Vagina (tissue), 2 donors: ENCODE measurements at regions of chr22 and their contacts with region 1.

Region 1: GRCh38 chr22:44625981-44626687 is 75.9 kb upstream of the PRR5 start:
- DNase-seq: no peak
- H3K4me3 ChIP-seq: no peak overlapping the region
- H3K27ac ChIP-seq: no peak overlapping the region
- H3K4me1 ChIP-seq: no peaks in the 10 kb centered on the region
- H3K27me3 ChIP-seq: no peaks in the 10 kb centered on the region
- CTCF ChIP-seq: peak; percentile 94 to 99 (median 99)
- POLR2A ChIP-seq: no peak

Region 2: GRCh38 chr22:43399338-43399979 is 1226.7 kb before region 1 on chr22:
- intact Hi-C with region 1: loop called (anchors 10 kb)
- DNase-seq: no peak
- H3K4me3 ChIP-seq: no peak overlapping the region
- H3K27ac ChIP-seq: no peak overlapping the region
- H3K4me1 ChIP-seq: no peaks in the 10 kb centered on the region
- H3K27me3 ChIP-seq: no peaks in the 10 kb centered on the region
- CTCF ChIP-seq: no peak
- POLR2A ChIP-seq: no peak

Region 3: GRCh38 chr22:43993027-43993760 is 632.9 kb before region 1 on chr22:
- intact Hi-C with region 1: loop called (anchors 2 kb)
- DNase-seq: no peak
- H3K4me3 ChIP-seq: no peak overlapping the region
- H3K27ac ChIP-seq: no peak overlapping the region
- H3K4me1 ChIP-seq: no peaks in the 10 kb centered on the region
- H3K27me3 ChIP-seq: no peaks in the 10 kb centered on the region
- CTCF ChIP-seq: peak; percentile 91 to 93 (median 92)
- POLR2A ChIP-seq: no peak

Region 4: GRCh38 chr22:44080936-44081861 is 544.9 kb before region 1 on chr22:
- intact Hi-C with region 1: loop called (anchors 10 kb)
- DNase-seq: no peak
- H3K4me3 ChIP-seq: no peak overlapping the region
- H3K27ac ChIP-seq: no peak overlapping the region
- H3K4me1 ChIP-seq: peaks cover 19% of the 10 kb centered on the region
- H3K27me3 ChIP-seq: no peaks in the 10 kb centered on the region
- CTCF ChIP-seq: peak; percentile 67 to 76 (median 69)
- POLR2A ChIP-seq: no peak

Region 5: DNA sequence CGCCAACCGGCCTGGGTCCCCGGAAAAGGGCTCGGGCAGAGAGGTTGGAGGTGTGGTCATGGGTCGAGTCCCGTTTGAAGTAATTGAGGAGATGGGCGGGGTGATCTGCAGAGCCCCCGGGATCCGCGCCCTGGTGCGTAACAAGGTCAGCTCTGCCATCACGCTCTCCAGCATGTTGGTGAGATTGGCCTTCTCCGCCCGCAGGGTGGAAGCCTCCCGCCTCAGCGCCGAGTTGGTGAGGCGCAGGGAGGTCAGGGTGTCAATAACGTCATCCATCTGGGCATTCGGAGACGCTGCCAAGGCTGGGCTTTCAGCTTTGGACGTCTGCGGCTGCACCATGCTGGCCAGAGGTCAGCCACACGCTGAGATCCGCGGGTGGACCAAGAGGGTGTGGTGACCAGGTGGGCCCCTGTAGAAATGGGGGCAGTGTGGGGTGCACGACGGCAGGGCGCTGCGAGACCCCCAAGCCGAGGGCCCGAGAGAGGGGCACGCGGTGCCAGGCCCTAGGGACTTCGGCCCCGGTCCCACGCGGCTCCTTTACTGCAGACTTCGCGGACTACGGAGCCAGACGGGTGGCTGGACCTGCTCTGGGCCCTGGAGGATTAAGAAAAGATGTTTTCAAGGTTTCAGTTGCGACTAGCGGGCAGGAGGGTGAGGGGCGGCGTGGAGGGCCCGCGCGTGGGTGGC is 128.8 kb before region 1 on chr22:
- intact Hi-C with region 1: no loop called
- DNase-seq: no peak
- H3K4me3 ChIP-seq: peak overlapping the region; percentile 87 to 98
- H3K27ac ChIP-seq: peak overlapping the region; percentile 84
- H3K4me1 ChIP-seq: peaks cover 23% of the 10 kb centered on the region
- H3K27me3 ChIP-seq: no peaks in the 10 kb centered on the region
- CTCF ChIP-seq: no peak
- POLR2A ChIP-seq: no peak

Region 6: GRCh38 chr22:44554411-44554810 is 71.7 kb before region 1 on chr22:
- intact Hi-C with region 1: no loop called
- DNase-seq: peak in 1 of 2 donors; percentile 65
- H3K4me3 ChIP-seq: no peak overlapping the region
- H3K27ac ChIP-seq: no peak overlapping the region
- H3K4me1 ChIP-seq: peaks cover 18% of the 10 kb centered on the region
- H3K27me3 ChIP-seq: no peaks in the 10 kb centered on the region
- CTCF ChIP-seq: no peak
- POLR2A ChIP-seq: no peak

Region 7: DNA sequence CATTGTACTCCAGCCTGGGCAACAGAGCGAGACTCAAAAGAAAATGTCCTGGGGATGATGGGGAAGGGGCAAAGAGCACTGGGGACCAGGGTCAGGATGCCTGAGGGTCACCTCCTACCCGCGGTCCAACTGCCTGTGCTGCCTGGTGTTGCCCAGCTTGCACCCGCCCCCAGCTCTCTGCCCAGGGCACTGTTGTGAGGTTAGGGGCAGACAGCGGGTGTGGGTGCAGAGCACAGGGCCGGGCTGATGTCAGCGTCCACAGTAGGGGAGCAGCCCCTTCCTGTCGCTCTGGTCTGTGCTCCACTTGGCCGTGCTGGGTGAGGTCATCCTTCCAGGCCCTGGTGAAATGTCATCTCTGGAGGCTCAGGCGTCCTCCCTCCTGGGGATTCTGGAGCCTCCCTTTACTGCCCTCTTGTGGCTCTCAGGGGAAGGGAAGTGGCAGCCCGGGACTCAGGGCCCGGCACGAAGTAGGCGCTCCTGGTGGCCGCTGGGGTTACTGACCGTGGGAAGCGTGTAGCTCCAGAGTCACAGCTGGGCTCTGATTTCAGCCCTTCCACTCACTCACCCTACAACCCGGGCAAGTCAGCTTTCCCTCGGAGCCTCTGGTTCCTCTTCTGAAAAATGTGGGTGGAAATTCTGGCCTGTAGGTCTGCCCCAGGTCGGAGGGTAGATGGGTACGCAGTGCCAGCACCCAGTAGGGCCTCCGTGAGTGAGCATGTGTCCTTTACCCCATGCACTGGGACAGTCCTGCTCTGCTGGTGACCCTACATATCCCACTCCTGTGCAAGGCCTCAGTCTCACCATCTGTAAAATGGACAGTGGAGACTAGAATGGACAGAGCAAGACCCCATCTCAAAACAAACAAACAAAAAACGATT is 58.6 kb after region 1 on chr22:
- intact Hi-C with region 1: no loop called
- DNase-seq: no peak
- H3K4me3 ChIP-seq: no peak overlapping the region
- H3K27ac ChIP-seq: peak overlapping the region; percentile 71
- H3K4me1 ChIP-seq: peaks cover 19% of the 10 kb centered on the region
- H3K27me3 ChIP-seq: no peaks in the 10 kb centered on the region
- CTCF ChIP-seq: peak; percentile 75 to 97 (median 78)
- POLR2A ChIP-seq: no peak

Region 8: DNA sequence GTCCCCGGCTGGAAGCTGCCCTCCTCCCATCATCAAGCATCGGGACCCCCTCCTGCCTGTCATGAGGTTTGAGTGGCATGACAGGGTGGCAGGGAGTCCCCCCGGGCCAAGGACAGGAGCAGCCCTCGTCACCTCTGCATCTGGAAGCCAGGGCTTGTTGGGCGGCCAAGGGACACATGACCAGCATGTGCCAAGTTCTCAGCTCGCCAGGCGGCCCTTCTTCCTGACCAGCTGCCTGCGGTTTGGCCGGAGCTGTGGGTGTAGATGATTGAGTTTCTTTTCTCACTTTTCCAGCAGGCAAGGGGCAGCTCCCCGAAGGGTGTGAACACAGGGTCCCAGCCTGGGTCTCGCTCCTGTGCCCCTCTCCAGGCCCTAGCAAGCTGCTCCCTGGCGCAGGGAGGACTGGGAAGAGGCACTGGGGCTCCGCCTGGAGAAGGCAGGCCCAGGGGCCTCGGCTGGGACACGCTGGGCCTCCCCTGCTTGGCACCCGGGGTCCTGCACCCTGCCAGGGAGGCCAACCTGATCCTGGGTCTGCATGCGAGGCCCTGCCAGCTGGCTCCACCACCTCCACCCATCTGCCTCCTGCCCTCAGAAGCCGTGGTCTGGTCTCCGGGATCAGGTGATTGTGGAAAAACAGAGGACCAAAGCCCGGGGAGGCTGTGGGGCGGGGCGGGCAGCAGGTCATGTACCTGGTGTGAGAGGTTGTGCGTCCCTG is 139.6 kb after region 1 on chr22:
- intact Hi-C with region 1: no loop called
- DNase-seq: no peak
- H3K4me3 ChIP-seq: no peak overlapping the region
- H3K27ac ChIP-seq: no peak overlapping the region
- H3K4me1 ChIP-seq: no peaks in the 10 kb centered on the region
- H3K27me3 ChIP-seq: no peaks in the 10 kb centered on the region
- CTCF ChIP-seq: no peak
- POLR2A ChIP-seq: no peak